Thyroid gland (tissue), 4 donors: ENCODE measurements at regions of chr3 and their contacts with region 1.

Region 1: DNA sequence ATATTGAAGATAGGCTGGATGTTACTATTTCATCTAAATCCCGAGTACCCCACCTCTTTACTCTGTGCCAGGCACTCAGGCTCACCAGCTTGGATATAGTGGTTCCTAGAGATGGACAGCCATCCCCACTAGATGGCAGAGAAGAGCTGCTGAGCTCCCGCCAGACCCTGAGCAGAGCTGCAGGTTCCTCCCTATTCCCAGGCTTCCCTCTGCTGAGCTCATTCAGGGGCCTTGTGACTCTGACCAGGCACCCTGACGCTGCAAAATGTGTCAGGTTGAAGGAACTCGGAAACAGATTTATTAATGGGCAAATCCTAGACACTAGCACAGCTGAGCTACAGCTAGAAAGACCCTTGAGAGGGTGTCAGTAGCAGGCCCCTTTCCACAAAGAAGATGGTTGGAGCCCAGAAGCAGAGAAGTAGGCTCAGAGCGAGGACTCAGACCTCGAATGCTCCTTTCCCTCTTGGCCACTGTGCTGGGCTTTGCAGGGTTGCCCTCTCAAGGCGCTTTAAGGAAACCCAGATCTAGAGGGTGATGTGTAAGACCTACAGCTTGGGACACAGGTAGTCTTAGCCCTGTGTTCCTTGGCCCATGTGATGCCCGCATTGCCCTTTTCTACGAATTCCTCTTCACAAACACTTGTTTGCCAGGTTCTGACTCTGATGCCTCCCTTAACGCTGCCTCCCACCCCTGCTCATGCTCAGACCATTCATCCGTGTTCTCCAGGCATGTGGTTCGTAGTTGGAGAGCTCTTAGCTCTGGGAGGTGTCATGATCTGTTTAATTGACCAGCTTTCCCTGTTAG is 38.0 kb upstream of the RHO start:
- DNase-seq: peak; percentile 78 to 84
- H3K4me3 ChIP-seq: no peak overlapping the region
- H3K27ac ChIP-seq: peak overlapping the region; percentile 63 to 87 (median 81)
- H3K4me1 ChIP-seq: peaks cover 6 to 38% of the 10 kb centered on the region in 2 donors
- H3K27me3 ChIP-seq: no peaks in the 10 kb centered on the region
- CTCF ChIP-seq: peak; percentile 69 to 89 (median 85)
- POLR2A ChIP-seq: no peak

Region 2: GRCh38 chr3:129428376-129429079 is 61.9 kb before region 1 on chr3 and contains the start of gene EFCAB12:
- intact Hi-C with region 1: no loop called
- DNase-seq: peak; percentile 96 to 97
- H3K4me3 ChIP-seq: peak within 1 kb of the TSS; percentile 37 to 73 (median 54)
- H3K27ac ChIP-seq: peak within 1 kb of the TSS; percentile 7 to 53 (median 31)
- H3K4me1 ChIP-seq: peaks cover 4 to 19% of the 10 kb centered on the region in 2 donors
- H3K27me3 ChIP-seq: no peaks in the 10 kb centered on the region
- CTCF ChIP-seq: no peak
- POLR2A ChIP-seq: peak in 1 of 2 donors; percentile 18
- total RNA-seq, gene EFCAB12: 0.67 to 1.2 (median 0.74) TPM

Region 3: GRCh38 chr3:129627429-129628168 is 137.2 kb after region 1 on chr3:
- intact Hi-C with region 1: loop called (anchors 10 kb)
- DNase-seq: peak; percentile 73 to 78
- H3K4me3 ChIP-seq: peak overlapping the region in 1 of 3 donors; percentile 60
- H3K27ac ChIP-seq: peak overlapping the region; percentile 87 to 97 (median 94)
- H3K4me1 ChIP-seq: peaks cover 36 to 57% of the 10 kb centered on the region in 2 donors
- H3K27me3 ChIP-seq: no peaks in the 10 kb centered on the region
- CTCF ChIP-seq: peak; percentile 55 to 97 (median 86)
- POLR2A ChIP-seq: no peak